Naive thymus-derived CD4-positive, alpha-beta T cell (primary cell): ENCODE measurements at regions of chr17 and their contacts with region 1.

Region 1: GRCh38 chr17:54992797-54993639 is 24.5 kb downstream of the STXBP4 start:
- DNase-seq: peak in 7 of 9 donors; percentile 12 to 56 (median 36)
- ATAC-seq: peak; percentile 77
- H3K4me3 ChIP-seq: no peak overlapping the region
- H3K4me3 Mint-ChIP-seq: no peak overlapping the region
- H3K27ac ChIP-seq: no peak overlapping the region
- H3K27ac Mint-ChIP-seq: no peak overlapping the region
- H3K4me1 ChIP-seq: no peaks in the 10 kb centered on the region
- H3K4me1 Mint-ChIP-seq: peaks cover 0 to 1% (median 0%) of the 10 kb centered on the region in 7 donors
- H3K27me3 ChIP-seq: no peaks in the 10 kb centered on the region
- H3K27me3 Mint-ChIP-seq: no peaks in the 10 kb centered on the region

Region 2: GRCh38 chr17:54860617-54861470 is 132.2 kb before region 1 on chr17:
- CTCF ChIA-PET with region 1: no interaction called
- POLR2A ChIA-PET with region 1: no interaction called
- intact Hi-C with region 1: no loop called
- DNase-seq: no peak
- ATAC-seq: no peak
- H3K4me3 ChIP-seq: no peak overlapping the region
- H3K4me3 Mint-ChIP-seq: no peak overlapping the region
- H3K27ac ChIP-seq: no peak overlapping the region
- H3K27ac Mint-ChIP-seq: no peak overlapping the region
- H3K4me1 ChIP-seq: no peaks in the 10 kb centered on the region
- H3K4me1 Mint-ChIP-seq: no peaks in the 10 kb centered on the region
- H3K27me3 ChIP-seq: no peaks in the 10 kb centered on the region
- H3K27me3 Mint-ChIP-seq: peaks cover 0 to 7% (median 3%) of the 10 kb centered on the region in 5 donors

Region 3: DNA sequence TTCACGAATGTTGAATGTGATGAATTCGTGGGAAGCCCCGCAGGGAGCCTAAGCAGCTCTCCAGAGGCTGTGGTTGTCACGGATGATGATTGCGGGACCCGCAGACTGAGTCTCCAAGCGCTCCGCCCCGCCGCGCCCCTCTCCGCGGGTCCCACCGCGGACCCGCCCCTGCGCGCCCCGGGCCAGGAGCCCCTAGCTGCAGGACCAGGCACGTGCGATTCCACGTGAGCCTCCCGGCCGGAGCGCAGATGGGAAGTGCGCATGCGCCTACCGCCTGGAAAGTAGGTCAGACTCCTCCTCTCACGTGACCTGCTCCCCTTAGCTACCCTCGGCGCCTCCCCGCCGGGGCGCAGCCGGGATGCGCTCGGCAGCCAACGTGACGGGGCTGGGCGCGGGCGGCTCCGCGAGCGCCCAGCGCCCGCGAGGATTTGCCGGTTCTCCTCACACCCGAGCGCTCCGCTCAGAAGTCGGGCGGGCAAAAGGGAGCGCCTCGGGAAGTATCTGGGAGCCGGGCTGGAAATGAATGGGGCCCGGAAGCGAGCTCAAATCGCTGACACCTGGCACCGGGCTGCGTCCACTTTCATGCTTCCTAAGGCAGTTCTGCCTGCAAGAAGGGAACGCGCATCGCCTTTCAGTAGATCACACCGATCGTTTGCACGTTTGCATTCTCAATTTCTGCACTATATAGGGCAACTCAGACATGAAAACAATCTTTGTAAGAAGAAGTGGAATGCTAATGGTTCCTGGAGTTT is 245.3 kb after region 1 on chr17:
- CTCF ChIA-PET with region 1: no interaction called
- POLR2A ChIA-PET with region 1: no interaction called
- intact Hi-C with region 1: loop called in 1 of 2 experiments (anchors 5 kb)
- DNase-seq: peak; percentile 60 to 81 (median 75)
- ATAC-seq: peak; percentile 92
- H3K4me3 ChIP-seq: peak overlapping the region; percentile 65
- H3K4me3 Mint-ChIP-seq: peak overlapping the region; percentile 84 to 94 (median 86)
- H3K27ac ChIP-seq: peak overlapping the region; percentile 14
- H3K27ac Mint-ChIP-seq: peak overlapping the region in 4 of 9 donors; percentile 16 to 76 (median 56)
- H3K4me1 ChIP-seq: peaks cover 6 to 19% of the 10 kb centered on the region in 2 donors
- H3K4me1 Mint-ChIP-seq: peaks cover 9 to 23% (median 19%) of the 10 kb centered on the region in 7 donors
- H3K27me3 ChIP-seq: no peaks in the 10 kb centered on the region
- H3K27me3 Mint-ChIP-seq: peaks cover 12 to 46% (median 21%) of the 10 kb centered on the region in 5 donors

Region 4: GRCh38 chr17:55348749-55349354 is 355.8 kb after region 1 on chr17:
- CTCF ChIA-PET with region 1: interaction called, 9 read pairs
- POLR2A ChIA-PET with region 1: no interaction called
- intact Hi-C with region 1: loop called (anchors 1 kb)
- DNase-seq: peak in 7 of 9 donors; percentile 8 to 36 (median 32)
- ATAC-seq: peak; percentile 71
- H3K4me3 ChIP-seq: no peak overlapping the region
- H3K4me3 Mint-ChIP-seq: peak overlapping the region in 6 of 10 donors; percentile 20 to 61 (median 41)
- H3K27ac ChIP-seq: no peak overlapping the region
- H3K27ac Mint-ChIP-seq: peak overlapping the region in 2 of 9 donors; percentile 11 to 53
- H3K4me1 ChIP-seq: peaks cover 0 to 7% of the 10 kb centered on the region in 2 donors
- H3K4me1 Mint-ChIP-seq: peaks cover 0 to 61% (median 7%) of the 10 kb centered on the region in 7 donors
- H3K27me3 ChIP-seq: no peaks in the 10 kb centered on the region
- H3K27me3 Mint-ChIP-seq: peaks cover 0 to 10% (median 7%) of the 10 kb centered on the region in 5 donors

Region 5: GRCh38 chr17:55513885-55514591 is 521.0 kb after region 1 on chr17:
- CTCF ChIA-PET with region 1: interaction called, 9 read pairs
- POLR2A ChIA-PET with region 1: no interaction called
- intact Hi-C with region 1: loop called (anchors 2 to 5 kb)
- DNase-seq: peak; percentile 40 to 73 (median 59)
- ATAC-seq: peak; percentile 78
- H3K4me3 ChIP-seq: no peak overlapping the region
- H3K4me3 Mint-ChIP-seq: no peak overlapping the region
- H3K27ac ChIP-seq: no peak overlapping the region
- H3K27ac Mint-ChIP-seq: no peak overlapping the region
- H3K4me1 ChIP-seq: no peaks in the 10 kb centered on the region
- H3K4me1 Mint-ChIP-seq: peaks cover 0 to 6% (median 0%) of the 10 kb centered on the region in 7 donors
- H3K27me3 ChIP-seq: no peaks in the 10 kb centered on the region
- H3K27me3 Mint-ChIP-seq: peaks cover 0 to 11% (median 8%) of the 10 kb centered on the region in 5 donors